Tibial artery (tissue), 4 donors: ENCODE measurements at regions of chr6 and their contacts with region 1.

Region 1: GRCh38 chr6:50819904-50820868 is 1.5 kb downstream of the TFAP2B start:
- DNase-seq: no peak
- H3K4me3 ChIP-seq: peak overlapping the region in 1 of 2 donors; percentile 37
- H3K27ac ChIP-seq: no peak overlapping the region
- H3K4me1 ChIP-seq: peaks cover 0 to 28% (median 19%) of the 10 kb centered on the region in 4 donors
- H3K27me3 ChIP-seq: peaks cover 0 to 97% of the 10 kb centered on the region in 2 donors
- CTCF ChIP-seq: no peak

Region 2: DNA sequence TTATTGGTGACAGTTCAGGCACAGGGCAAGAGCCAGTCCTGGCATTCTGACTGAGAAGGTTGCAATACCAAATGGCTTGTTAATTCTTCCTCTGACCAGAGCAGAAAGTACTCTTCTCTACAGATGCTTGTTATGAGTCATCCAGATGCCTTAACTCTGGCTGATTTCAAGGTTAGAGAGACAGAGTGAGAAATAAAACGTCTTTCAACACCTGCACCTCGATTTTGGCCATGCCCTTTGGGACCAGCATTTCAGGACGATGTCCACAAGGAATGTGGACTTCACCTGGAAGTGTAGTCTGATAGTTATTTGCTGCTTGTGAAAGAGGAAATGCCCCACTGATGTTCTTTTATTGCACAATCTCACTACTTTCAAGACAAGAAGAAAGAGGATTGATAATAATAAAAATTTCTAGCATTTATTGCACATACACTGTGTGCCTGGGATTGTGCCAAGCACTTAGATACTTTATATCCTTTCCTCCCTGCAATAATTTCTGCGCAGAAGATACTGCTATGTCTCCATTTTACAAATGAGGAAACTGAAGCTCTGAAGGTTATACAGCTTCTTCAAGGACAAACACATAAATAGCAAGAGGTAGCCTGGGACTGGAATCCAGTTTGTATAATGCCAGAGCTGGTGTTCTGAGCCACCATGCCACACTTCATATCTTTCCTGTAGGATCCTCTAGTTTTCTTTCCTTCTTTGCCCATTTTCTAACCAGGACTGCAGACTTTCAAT is 1497.8 kb after region 1 on chr6:
- intact Hi-C with region 1: loop called (anchors 10 kb)
- DNase-seq: no peak
- H3K4me3 ChIP-seq: no peak overlapping the region
- H3K27ac ChIP-seq: no peak overlapping the region
- H3K4me1 ChIP-seq: no peaks in the 10 kb centered on the region
- H3K27me3 ChIP-seq: no peaks in the 10 kb centered on the region
- CTCF ChIP-seq: no peak